Transverse colon (tissue), 4 donors: ENCODE measurements at regions of chr10 and their contacts with region 1.

Region 1: GRCh38 chr10:7260412-7260900 is 150.4 kb downstream of the SFMBT2 start:
- DNase-seq: peak; percentile 44
- H3K4me3 ChIP-seq: no peak overlapping the region
- H3K27ac ChIP-seq: peak overlapping the region in 3 of 4 donors; percentile 41 to 59 (median 45)
- H3K4me1 ChIP-seq: peaks cover 0 to 9% (median 9%) of the 10 kb centered on the region in 4 donors
- H3K27me3 ChIP-seq: no peaks in the 10 kb centered on the region
- CTCF ChIP-seq: peak; percentile 55 to 72 (median 62)
- EP300 ChIP-seq: no peak
- POLR2A ChIP-seq: no peak

Region 2: DNA sequence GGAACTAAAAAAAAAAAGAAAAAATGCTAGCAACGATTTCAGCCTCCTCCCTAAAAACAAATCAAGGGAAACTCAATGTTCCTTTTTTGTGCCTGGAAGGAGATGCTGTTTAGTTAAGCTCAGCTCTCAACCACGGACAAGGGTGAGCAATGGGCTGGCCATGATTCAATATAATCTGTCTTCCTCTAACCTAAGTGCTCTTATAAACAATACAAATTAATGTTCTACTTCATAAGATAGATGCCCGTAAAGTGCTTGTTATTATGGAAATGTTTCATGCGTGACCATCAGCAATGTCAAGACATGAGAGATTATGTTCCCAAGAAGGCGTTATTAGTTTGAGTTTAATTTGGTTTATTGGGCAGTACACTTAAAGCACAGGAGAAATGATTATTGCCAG is 169.9 kb before region 1 on chr10:
- in situ Hi-C with region 1: no loop called
- intact Hi-C with region 1: loop called (anchors 10 kb)
- DNase-seq: no peak
- H3K4me3 ChIP-seq: no peak overlapping the region
- H3K27ac ChIP-seq: peak overlapping the region; percentile 16 to 59 (median 39)
- H3K4me1 ChIP-seq: peaks cover 0 to 7% (median 0%) of the 10 kb centered on the region in 4 donors
- H3K27me3 ChIP-seq: no peaks in the 10 kb centered on the region
- CTCF ChIP-seq: no peak
- EP300 ChIP-seq: peak; percentile 12
- POLR2A ChIP-seq: no peak

Region 3: GRCh38 chr10:7161484-7162250 is 98.8 kb before region 1 on chr10:
- in situ Hi-C with region 1: no loop called
- intact Hi-C with region 1: no loop called
- DNase-seq: no peak
- H3K4me3 ChIP-seq: no peak overlapping the region
- H3K27ac ChIP-seq: no peak overlapping the region
- H3K4me1 ChIP-seq: no peaks in the 10 kb centered on the region
- H3K27me3 ChIP-seq: no peaks in the 10 kb centered on the region
- CTCF ChIP-seq: no peak
- EP300 ChIP-seq: no peak
- POLR2A ChIP-seq: no peak